Calu3 (cell line): ENCODE measurements at regions of chr5 and their contacts with region 1.

Region 1: GRCh38 chr5:157026789-157027424 is 32.0 kb downstream of the HAVCR1 start:
- DNase-seq: peak; percentile 64
- H3K4me3 Mint-ChIP-seq: no peak overlapping the region
- H3K27ac Mint-ChIP-seq: no peak overlapping the region
- H3K4me1 Mint-ChIP-seq: peaks cover 31% of the 10 kb centered on the region
- H3K27me3 Mint-ChIP-seq: no peaks in the 10 kb centered on the region
- CTCF ChIP-seq: peak; percentile 60

Region 2: DNA sequence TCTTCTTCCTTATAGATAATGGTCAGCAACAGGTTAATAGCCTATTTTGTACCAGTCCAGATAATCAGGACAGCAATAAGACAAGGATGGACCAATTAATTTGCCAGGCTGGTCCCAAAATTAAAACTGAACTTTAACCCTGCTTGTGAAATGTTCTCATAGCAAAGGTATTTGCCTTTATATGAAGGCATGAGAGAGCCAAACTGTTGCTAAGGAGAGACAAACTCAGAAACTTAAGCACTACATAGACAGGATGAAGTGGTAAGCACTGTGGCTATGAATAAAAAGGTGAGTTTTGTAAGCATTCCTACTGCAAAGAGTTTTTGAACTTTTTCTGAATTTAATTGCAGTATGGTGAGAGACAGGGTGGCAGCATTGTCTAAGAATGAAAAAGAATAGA is 351.5 kb before region 1 on chr5:
- CTCF ChIA-PET with region 1: no interaction called
- intact Hi-C with region 1: loop called (anchors 10 kb)
- DNase-seq: no peak
- H3K4me3 Mint-ChIP-seq: no peak overlapping the region
- H3K27ac Mint-ChIP-seq: no peak overlapping the region
- H3K4me1 Mint-ChIP-seq: peaks cover 17% of the 10 kb centered on the region
- H3K27me3 Mint-ChIP-seq: no peaks in the 10 kb centered on the region
- CTCF ChIP-seq: no peak

Region 3: DNA sequence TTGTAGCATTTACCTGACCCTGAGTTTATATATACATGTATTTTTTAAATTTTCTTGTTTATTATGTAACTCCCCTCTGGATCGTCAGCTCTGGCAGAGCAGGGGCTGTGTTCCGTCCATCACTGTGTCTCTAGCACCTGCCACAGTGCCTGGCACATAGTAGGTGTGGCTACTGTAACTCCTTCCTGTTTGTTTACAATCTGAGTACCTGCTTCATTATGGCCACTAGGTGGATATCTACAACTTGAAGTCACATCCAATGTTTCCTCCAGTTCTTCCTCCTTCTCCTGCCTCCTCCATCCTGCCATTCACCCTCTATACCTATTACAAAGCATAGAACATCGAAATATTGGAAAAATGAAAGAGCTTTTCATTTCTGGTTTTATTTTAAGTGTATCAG is 191.0 kb before region 1 on chr5:
- CTCF ChIA-PET with region 1: no interaction called
- intact Hi-C with region 1: loop called (anchors 2 kb)
- DNase-seq: peak; percentile 11
- H3K4me3 Mint-ChIP-seq: no peak overlapping the region
- H3K27ac Mint-ChIP-seq: no peak overlapping the region
- H3K4me1 Mint-ChIP-seq: no peaks in the 10 kb centered on the region
- H3K27me3 Mint-ChIP-seq: no peaks in the 10 kb centered on the region
- CTCF ChIP-seq: peak; percentile 51

Region 4: DNA sequence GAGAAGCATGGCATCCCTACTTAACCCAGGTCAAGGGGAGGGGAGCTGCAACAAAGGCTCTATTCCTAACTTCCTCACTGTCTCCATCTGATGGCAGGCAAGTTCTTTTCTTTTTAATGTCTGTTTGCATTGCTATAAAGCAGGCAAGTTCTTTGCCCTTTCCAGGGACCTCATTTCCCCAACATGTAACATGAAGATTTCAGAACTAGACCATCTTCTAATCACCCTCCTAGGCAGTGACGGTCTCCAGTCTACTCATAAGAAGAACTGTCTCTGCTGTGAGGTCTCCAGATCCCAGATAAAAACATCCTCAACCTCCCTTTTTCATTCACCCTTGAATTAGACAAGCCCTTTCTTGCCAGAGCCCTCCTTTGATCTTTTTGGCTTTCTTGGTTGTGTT is 134.7 kb before region 1 on chr5:
- CTCF ChIA-PET with region 1: no interaction called
- intact Hi-C with region 1: loop called (anchors 1 kb)
- DNase-seq: no peak
- H3K4me3 Mint-ChIP-seq: no peak overlapping the region
- H3K27ac Mint-ChIP-seq: no peak overlapping the region
- H3K4me1 Mint-ChIP-seq: no peaks in the 10 kb centered on the region
- H3K27me3 Mint-ChIP-seq: no peaks in the 10 kb centered on the region
- CTCF ChIP-seq: no peak

Region 5: GRCh38 chr5:156934450-156935211 is 92.3 kb before region 1 on chr5:
- CTCF ChIA-PET with region 1: no interaction called
- intact Hi-C with region 1: loop called (anchors 5 kb)
- DNase-seq: peak; percentile 52
- H3K4me3 Mint-ChIP-seq: no peak overlapping the region
- H3K27ac Mint-ChIP-seq: no peak overlapping the region
- H3K4me1 Mint-ChIP-seq: no peaks in the 10 kb centered on the region
- H3K27me3 Mint-ChIP-seq: no peaks in the 10 kb centered on the region
- CTCF ChIP-seq: peak; percentile 33

Region 6: DNA sequence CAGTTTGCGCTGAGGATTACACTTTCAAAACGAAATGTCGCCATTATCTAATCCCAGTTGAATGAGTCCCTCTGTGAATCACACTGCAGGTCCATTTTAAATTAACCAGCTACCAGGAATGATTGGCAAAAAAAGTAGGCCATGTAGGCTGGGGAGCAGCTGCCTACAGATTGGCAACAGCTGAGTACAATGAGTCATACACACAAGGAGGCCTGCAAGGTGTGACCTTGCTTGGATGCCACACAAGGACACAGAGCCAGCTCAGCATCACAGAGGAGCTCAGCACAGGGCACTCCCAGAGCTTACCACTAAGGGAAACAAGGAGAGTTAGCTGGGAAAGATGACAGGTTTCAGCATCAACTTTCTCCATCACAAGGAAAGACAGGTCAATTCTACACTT is 19.1 kb after region 1 on chr5:
- CTCF ChIA-PET with region 1: no interaction called
- intact Hi-C with region 1: no loop called
- DNase-seq: peak; percentile 85
- H3K4me3 Mint-ChIP-seq: peak overlapping the region; percentile 44
- H3K27ac Mint-ChIP-seq: peak overlapping the region; percentile 98
- H3K4me1 Mint-ChIP-seq: peaks cover 62% of the 10 kb centered on the region
- H3K27me3 Mint-ChIP-seq: no peaks in the 10 kb centered on the region
- CTCF ChIP-seq: no peak

Region 7: GRCh38 chr5:157072508-157072907 is 45.6 kb after region 1 on chr5:
- CTCF ChIA-PET with region 1: no interaction called
- intact Hi-C with region 1: loop called (anchors 5 kb)
- DNase-seq: peak; percentile 83
- H3K4me3 Mint-ChIP-seq: peak overlapping the region; percentile 31
- H3K27ac Mint-ChIP-seq: peak overlapping the region; percentile 91
- H3K4me1 Mint-ChIP-seq: peaks cover 46% of the 10 kb centered on the region
- H3K27me3 Mint-ChIP-seq: no peaks in the 10 kb centered on the region
- CTCF ChIP-seq: no peak